HCT116 (cell line): ENCODE measurements at regions of chr1 and their contacts with region 1.

Region 1: DNA sequence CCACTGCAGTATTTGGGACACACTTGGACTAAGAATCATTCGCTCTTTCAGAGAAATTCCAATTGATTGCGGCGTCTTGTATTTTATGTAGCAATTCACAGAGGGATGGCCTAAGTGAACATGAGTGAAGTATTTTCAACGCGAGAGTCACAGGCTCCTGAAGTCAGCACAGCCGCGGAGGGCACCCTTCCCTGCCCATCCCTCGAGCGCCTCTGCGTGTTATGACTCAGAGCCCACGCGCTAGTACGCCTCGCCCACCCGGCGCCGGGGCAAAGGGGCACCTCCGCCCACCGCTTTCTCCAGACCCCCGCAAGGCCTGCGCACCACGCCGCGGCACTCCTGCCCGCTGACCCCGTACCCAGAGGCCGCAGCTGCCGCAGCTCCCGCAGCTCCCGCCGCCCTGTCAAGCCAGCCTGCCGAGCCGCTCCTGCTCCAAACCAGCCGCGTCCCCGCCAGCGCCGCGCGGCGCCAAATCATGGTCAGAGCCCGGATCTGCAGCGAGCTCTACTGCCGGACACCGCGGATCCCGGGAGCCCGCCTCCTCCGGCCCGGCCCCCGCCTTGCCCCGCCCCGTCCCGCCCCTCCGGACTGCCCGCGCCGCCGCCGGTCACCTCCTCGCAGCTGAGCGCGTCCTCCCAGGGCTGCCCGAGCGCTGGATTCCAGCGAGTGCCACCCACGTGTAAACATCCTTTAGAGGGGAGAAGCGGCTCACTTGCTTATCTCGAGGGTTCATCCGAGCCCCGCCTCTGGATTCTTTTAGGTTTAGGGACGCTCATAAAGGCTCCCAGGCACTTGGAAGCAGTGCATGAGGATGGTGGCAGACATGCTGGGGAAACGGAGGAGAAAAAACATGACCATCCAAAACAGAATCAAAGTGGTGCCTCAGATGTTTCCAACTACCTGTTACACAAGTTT is at the start of gene GLRX2:
- DNase-seq: peak; percentile 71
- ATAC-seq: peak; percentile 90
- H3K4me3 ChIP-seq: peak within 1 kb of the TSS; percentile 58 to 74
- H3K27ac ChIP-seq: peak within 1 kb of the TSS; percentile 79
- H3K4me1 ChIP-seq: peaks cover 12 to 20% of the 10 kb centered on the region in 2 experiments; a peak in 3 of 4 replicates
- H3K27me3 ChIP-seq: no peaks in the 10 kb centered on the region
- CTCF ChIP-seq: no peak
- POLR2A ChIP-seq: peak; percentile 66
- RAD21 ChIP-seq: peak; percentile 28; the same call in 1 of the 2 replicates
- total RNA-seq, gene GLRX2: 30.6 TPM

Region 2: DNA sequence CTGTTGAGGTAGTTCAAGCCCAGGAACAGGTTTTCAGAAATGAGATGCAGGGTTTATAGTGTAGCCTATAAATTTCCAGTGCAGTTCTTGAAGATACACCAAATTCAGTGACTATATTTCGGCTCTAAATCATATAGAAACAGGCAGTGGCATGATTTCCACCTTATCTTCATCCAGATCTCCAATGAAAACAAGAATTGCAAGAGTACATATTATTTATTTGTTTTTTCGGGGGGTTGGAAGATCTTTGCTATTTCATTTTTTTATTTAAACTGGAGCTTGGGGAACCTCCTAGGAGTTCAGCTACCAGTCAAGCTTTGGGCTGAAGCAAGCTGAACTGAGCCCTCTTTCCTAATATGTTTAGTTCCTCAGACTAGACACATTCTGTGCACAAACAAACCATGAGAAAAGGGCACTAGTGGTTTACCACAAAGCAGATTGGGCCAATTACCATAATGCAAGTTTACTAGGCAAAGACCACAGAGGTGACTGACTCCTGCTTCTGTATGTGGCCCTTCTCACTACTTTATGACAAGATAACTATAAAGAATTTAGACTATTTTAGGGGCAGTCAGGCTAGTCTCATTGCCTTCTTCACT is 227.8 kb before region 1 on chr1:
- CTCF ChIA-PET with region 1: no interaction called
- POLR2A ChIA-PET with region 1: no interaction called
- RAD21 ChIA-PET with region 1: no interaction called
- intact Hi-C with region 1: no loop called
- DNase-seq: no peak
- ATAC-seq: no peak
- H3K4me3 ChIP-seq: no peak overlapping the region
- H3K27ac ChIP-seq: no peak overlapping the region
- H3K4me1 ChIP-seq: no peaks in the 10 kb centered on the region
- H3K27me3 ChIP-seq: no peaks in the 10 kb centered on the region
- CTCF ChIP-seq: no peak
- POLR2A ChIP-seq: no peak
- RAD21 ChIP-seq: no peak

Region 3: GRCh38 chr1:193059268-193060225 is 45.6 kb before region 1 on chr1 and contains the starts of genes RO60 and UCHL5:
- CTCF ChIA-PET with region 1: no interaction called
- POLR2A ChIA-PET with region 1: interaction called, 6 read pairs
- RAD21 ChIA-PET with region 1: interaction called in 1 of 2 experiments, 3 read pairs
- intact Hi-C with region 1: loop called (anchors 1 kb)
- DNase-seq: peak; percentile 99
- ATAC-seq: peak; percentile 94
- H3K4me3 ChIP-seq: peak within 1 kb of the TSS; percentile 77 to 92
- H3K27ac ChIP-seq: peak within 1 kb of the TSS; percentile 93
- H3K4me1 ChIP-seq: peaks cover 11 to 25% of the 10 kb centered on the region in 2 experiments; a peak in 3 of 4 replicates
- H3K27me3 ChIP-seq: no peaks in the 10 kb centered on the region
- CTCF ChIP-seq: no peak
- POLR2A ChIP-seq: peak; percentile 94
- RAD21 ChIP-seq: no peak; the same call in 1 of the 2 replicates
- total RNA-seq, gene RO60: 69.5 TPM
- total RNA-seq, gene UCHL5: 75.8 TPM

Region 4: GRCh38 chr1:193115629-193116227 is 10.6 kb after region 1 on chr1:
- CTCF ChIA-PET with region 1: interaction called, 3 read pairs
- POLR2A ChIA-PET with region 1: interaction called, 16 read pairs
- RAD21 ChIA-PET with region 1: interaction called in 1 of 2 experiments, 4 read pairs
- intact Hi-C with region 1: no loop called
- DNase-seq: peak; percentile 93
- ATAC-seq: peak; percentile 89
- H3K4me3 ChIP-seq: peak overlapping the region in 1 of 2 experiments; percentile 20; a peak in 2 of 4 replicates
- H3K27ac ChIP-seq: peak overlapping the region; percentile 47; the same call in 1 of the 2 replicates
- H3K4me1 ChIP-seq: peaks cover 23 to 30% of the 10 kb centered on the region in 2 experiments
- H3K27me3 ChIP-seq: no peaks in the 10 kb centered on the region
- CTCF ChIP-seq: no peak
- POLR2A ChIP-seq: no peak
- RAD21 ChIP-seq: peak; percentile 23; the same call in 1 of the 2 replicates

Region 5: GRCh38 chr1:193311226-193311948 is 206.2 kb after region 1 on chr1:
- CTCF ChIA-PET with region 1: no interaction called
- POLR2A ChIA-PET with region 1: no interaction called
- RAD21 ChIA-PET with region 1: no interaction called
- intact Hi-C with region 1: no loop called
- DNase-seq: no peak
- ATAC-seq: no peak
- H3K4me3 ChIP-seq: no peak overlapping the region
- H3K27ac ChIP-seq: no peak overlapping the region
- H3K4me1 ChIP-seq: no peaks in the 10 kb centered on the region
- H3K27me3 ChIP-seq: no peaks in the 10 kb centered on the region
- CTCF ChIP-seq: no peak
- POLR2A ChIP-seq: no peak
- RAD21 ChIP-seq: no peak

Region 6: GRCh38 chr1:193388683-193389082 is 283.5 kb after region 1 on chr1:
- CTCF ChIA-PET with region 1: no interaction called
- POLR2A ChIA-PET with region 1: no interaction called
- RAD21 ChIA-PET with region 1: no interaction called
- intact Hi-C with region 1: no loop called
- DNase-seq: no peak
- ATAC-seq: no peak
- H3K4me3 ChIP-seq: no peak overlapping the region
- H3K27ac ChIP-seq: no peak overlapping the region
- H3K4me1 ChIP-seq: no peaks in the 10 kb centered on the region
- H3K27me3 ChIP-seq: no peaks in the 10 kb centered on the region
- CTCF ChIP-seq: no peak
- POLR2A ChIP-seq: no peak
- RAD21 ChIP-seq: no peak